Activated naive CD4-positive, alpha-beta T cell treated with anti-CD3 and anti-CD28 coated beads for 36 hours (primary cell): ENCODE measurements at regions of chr12 and their contacts with region 1.

Region 1: DNA sequence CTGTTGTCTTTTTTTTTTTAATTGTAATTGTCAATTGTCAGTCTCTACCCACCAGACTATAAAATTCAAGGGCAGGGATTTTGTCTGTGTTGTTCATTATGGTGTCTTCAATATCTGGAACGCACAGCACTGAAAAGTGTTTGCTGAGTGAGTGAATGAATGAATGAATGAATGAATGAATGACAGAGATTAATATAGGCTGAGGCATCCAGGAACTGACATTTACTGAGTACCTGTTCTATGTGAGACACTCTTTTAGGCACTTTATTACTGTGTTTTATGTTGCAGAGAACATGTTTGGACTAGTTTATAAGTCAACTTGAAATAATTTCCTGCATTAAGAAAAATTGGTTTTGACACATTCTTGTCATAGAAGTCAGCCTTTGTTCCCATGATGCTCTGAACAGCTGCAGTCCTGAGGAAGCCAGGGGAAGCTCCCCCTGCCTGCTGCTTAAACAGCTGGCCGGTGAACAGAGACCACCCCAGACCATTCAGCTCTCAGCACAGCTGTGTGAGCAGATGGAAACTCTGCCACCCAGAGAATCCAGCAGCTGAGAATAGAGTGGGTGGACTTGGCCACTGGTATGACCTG is 160.7 kb upstream of the CCND2 start:
- DNase-seq: no peak
- H3K4me3 Mint-ChIP-seq: no peak overlapping the region
- H3K27ac Mint-ChIP-seq: peak overlapping the region; percentile 73
- H3K4me1 Mint-ChIP-seq: peaks cover 61% of the 10 kb centered on the region
- H3K27me3 Mint-ChIP-seq: peaks cover 3% of the 10 kb centered on the region

Region 2: DNA sequence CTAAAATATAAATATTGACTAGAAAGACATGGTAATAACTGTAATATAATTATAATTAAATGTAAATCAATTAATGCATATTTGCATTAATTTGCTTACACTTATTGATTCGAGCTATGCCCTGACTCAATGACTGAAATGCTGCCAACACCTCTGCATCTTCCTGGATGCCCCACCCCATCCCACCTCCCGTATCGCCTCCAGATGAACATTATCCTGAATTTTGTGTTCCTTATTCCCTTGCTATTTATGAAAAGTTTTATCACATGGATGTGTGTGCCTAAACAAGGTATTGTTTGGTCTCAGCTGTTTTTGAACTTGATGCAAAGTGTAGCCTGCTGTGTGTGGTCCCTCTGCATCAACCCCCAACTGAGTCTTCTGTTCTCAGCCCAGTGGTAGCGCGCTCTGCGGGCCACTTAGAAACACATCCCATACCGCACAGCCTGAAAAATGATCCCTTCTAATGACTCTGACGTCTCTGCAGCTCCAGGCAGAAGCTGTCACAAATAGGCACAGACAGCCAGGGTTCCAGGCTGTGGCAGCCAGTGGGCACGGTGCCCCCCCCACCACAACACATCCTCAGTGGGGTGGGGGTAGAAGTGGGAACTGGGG is 525.3 kb before region 1 on chr12:
- CTCF ChIA-PET with region 1: no interaction called
- intact Hi-C with region 1: no loop called
- DNase-seq: no peak
- H3K4me3 Mint-ChIP-seq: no peak overlapping the region
- H3K27ac Mint-ChIP-seq: no peak overlapping the region
- H3K4me1 Mint-ChIP-seq: no peaks in the 10 kb centered on the region
- H3K27me3 Mint-ChIP-seq: peaks cover 5% of the 10 kb centered on the region

Region 3: GRCh38 chr12:4135919-4136605 is 23.2 kb after region 1 on chr12:
- CTCF ChIA-PET with region 1: interaction called, 44 read pairs
- intact Hi-C with region 1: loop called (anchors 1 kb)
- DNase-seq: peak; percentile 95
- H3K4me3 Mint-ChIP-seq: peak overlapping the region; percentile 41
- H3K27ac Mint-ChIP-seq: peak overlapping the region; percentile 99
- H3K4me1 Mint-ChIP-seq: peaks cover 75% of the 10 kb centered on the region
- H3K27me3 Mint-ChIP-seq: no peaks in the 10 kb centered on the region